Naive thymus-derived CD4-positive, alpha-beta T cell (primary cell): ENCODE measurements at regions of chr6 and their contacts with region 1.

Region 1: DNA sequence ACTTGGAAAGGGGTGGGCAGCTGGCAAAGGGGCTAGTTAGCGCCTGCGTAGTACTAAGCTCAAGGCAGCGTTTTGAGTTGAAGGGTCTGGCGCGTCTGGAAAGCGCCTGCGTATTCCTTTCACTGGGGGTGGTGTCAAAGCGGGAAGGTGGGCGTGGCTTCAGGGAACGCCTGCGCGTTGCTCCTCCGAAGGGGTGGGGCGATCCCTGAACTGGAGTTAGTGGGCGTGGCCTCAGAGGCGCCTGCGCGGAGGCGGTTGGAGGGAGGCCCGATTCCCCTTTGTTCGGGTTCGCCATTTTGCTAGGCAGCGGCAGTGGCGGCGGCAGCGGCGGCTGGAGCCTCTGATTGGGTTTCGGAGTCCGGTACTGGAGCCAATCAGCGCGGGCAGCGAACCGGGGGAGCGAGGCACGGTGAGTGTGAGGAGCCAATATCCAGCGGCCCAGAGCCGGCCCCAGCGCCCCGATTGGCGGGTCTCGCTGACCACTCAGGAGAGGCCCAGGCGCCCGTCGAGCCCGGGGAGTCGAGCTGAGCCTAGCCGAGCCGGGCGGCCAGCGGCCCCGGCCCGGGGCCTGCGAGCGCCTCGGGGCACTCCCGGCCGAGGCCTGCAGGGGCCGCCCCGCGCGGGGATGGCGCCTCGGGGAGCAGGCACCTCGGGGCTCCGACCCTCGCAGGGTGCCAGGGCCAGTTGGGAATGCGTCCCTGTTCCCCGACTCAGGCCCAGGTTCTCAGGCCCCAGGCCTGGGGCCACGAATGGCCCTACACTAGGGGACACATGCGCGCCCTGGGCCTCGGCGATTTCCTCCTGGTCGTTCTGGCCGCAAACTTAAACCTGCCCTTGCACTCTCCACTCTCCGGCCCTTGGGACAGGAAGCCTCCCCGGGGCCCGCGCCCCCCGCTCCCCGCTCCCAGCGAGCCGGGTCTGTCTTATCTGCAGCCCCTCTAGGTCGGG is at the start of gene NFYA:
- DNase-seq: peak; percentile 99 to 100 (median 100)
- ATAC-seq: peak; percentile 80
- H3K4me3 ChIP-seq: peak within 1 kb of the TSS; percentile 78
- H3K4me3 Mint-ChIP-seq: peak within 1 kb of the TSS; percentile 90 to 98 (median 96)
- H3K27ac ChIP-seq: peak within 1 kb of the TSS; percentile 95
- H3K27ac Mint-ChIP-seq: peak within 1 kb of the TSS; percentile 95 to 99 (median 97)
- H3K4me1 ChIP-seq: peaks cover 30% of the 10 kb centered on the region in 2 donors
- H3K4me1 Mint-ChIP-seq: peaks cover 39 to 66% (median 59%) of the 10 kb centered on the region in 7 donors
- H3K27me3 ChIP-seq: no peaks in the 10 kb centered on the region
- H3K27me3 Mint-ChIP-seq: peaks cover 0 to 5% (median 0%) of the 10 kb centered on the region in 5 donors
- total RNA-seq, gene NFYA: 31.6 to 63.3 (median 35.9) TPM

Region 2: GRCh38 chr6:39724787-39725631 is 1347.9 kb before region 1 on chr6 and contains the start of gene KIF6:
- CTCF ChIA-PET with region 1: no interaction called
- POLR2A ChIA-PET with region 1: no interaction called
- intact Hi-C with region 1: loop called in 1 of 2 experiments (anchors 2 kb)
- DNase-seq: peak; percentile 50 to 85 (median 77)
- ATAC-seq: peak; percentile 99
- H3K4me3 ChIP-seq: peak within 1 kb of the TSS; percentile 68
- H3K4me3 Mint-ChIP-seq: peak within 1 kb of the TSS; percentile 92 to 98 (median 97)
- H3K27ac ChIP-seq: no peak within 1 kb of the TSS
- H3K27ac Mint-ChIP-seq: peak within 1 kb of the TSS; percentile 10 to 91 (median 72)
- H3K4me1 ChIP-seq: peaks cover 0 to 3% of the 10 kb centered on the region in 2 donors
- H3K4me1 Mint-ChIP-seq: peaks cover 0 to 9% (median 7%) of the 10 kb centered on the region in 7 donors
- H3K27me3 ChIP-seq: no peaks in the 10 kb centered on the region
- H3K27me3 Mint-ChIP-seq: peaks cover 0 to 6% (median 4%) of the 10 kb centered on the region in 5 donors
- total RNA-seq, gene KIF6: not detected

Region 3: GRCh38 chr6:40922281-40922680 is 150.7 kb before region 1 on chr6:
- CTCF ChIA-PET with region 1: no interaction called
- POLR2A ChIA-PET with region 1: no interaction called
- intact Hi-C with region 1: no loop called
- DNase-seq: no peak
- ATAC-seq: no peak
- H3K4me3 ChIP-seq: no peak overlapping the region
- H3K4me3 Mint-ChIP-seq: no peak overlapping the region
- H3K27ac ChIP-seq: no peak overlapping the region
- H3K27ac Mint-ChIP-seq: no peak overlapping the region
- H3K4me1 ChIP-seq: no peaks in the 10 kb centered on the region
- H3K4me1 Mint-ChIP-seq: peaks cover 0 to 2% (median 0%) of the 10 kb centered on the region in 7 donors
- H3K27me3 ChIP-seq: no peaks in the 10 kb centered on the region
- H3K27me3 Mint-ChIP-seq: peaks cover 15 to 31% (median 21%) of the 10 kb centered on the region in 5 donors

Region 4: DNA sequence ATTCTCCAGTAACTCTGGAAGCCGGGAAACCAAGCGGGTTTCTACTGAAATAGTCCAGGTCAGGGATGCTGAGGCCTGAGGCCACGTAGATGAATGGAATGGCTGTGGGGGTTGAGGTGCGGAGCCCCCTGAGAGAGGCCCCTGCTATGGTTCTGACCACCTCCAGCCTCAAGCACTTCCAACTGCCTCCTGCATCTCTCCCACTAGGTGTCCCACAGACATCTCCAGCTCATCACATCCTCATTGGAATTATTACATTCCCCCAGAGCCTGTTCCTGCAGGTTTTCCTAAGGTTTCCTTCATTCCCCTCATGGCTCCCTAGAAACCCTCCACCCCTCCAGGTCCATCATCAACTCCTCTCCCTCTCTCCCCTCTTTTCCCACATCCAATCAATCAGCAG is 82.6 kb before region 1 on chr6:
- CTCF ChIA-PET with region 1: no interaction called
- POLR2A ChIA-PET with region 1: no interaction called
- intact Hi-C with region 1: no loop called
- DNase-seq: no peak
- ATAC-seq: no peak
- H3K4me3 ChIP-seq: no peak overlapping the region
- H3K4me3 Mint-ChIP-seq: no peak overlapping the region
- H3K27ac ChIP-seq: no peak overlapping the region
- H3K27ac Mint-ChIP-seq: no peak overlapping the region
- H3K4me1 ChIP-seq: no peaks in the 10 kb centered on the region
- H3K4me1 Mint-ChIP-seq: peaks cover 0 to 2% (median 0%) of the 10 kb centered on the region in 7 donors
- H3K27me3 ChIP-seq: no peaks in the 10 kb centered on the region
- H3K27me3 Mint-ChIP-seq: peaks cover 5 to 38% (median 34%) of the 10 kb centered on the region in 5 donors

Region 5: DNA sequence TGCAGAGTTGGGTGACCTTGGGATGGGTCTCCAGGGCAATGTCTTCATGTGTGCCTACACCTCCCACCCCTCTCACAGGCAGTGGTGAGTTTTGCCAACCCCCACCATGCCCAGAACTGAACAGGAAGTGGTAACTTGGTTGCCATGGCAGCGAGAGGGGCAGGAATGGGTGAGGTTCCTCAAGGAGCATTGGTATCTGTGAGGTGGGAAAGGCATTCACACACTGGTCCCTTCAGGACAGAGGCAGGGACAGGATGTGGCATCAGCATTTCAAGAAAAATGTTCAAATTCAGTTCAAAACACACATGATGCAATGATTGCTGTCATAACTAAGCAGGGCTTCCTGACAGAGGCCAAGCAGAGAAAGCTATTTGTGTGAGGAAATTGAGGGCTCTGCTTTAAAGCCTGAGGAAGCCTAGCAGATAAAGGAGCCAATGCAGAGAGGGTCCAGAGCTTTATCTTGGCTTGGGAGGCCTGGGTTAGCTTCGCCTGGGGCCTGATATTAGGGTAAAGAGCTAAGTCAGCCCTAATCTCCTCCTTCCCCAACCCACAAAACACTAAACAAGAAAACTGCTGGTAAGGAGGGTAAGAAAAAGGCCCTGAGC is 127.4 kb after region 1 on chr6:
- CTCF ChIA-PET with region 1: no interaction called
- POLR2A ChIA-PET with region 1: interaction called, 8 read pairs
- intact Hi-C with region 1: loop called (anchors 1 kb)
- DNase-seq: peak; percentile 34 to 87 (median 78)
- ATAC-seq: peak; percentile 79
- H3K4me3 ChIP-seq: peak overlapping the region; percentile 26
- H3K4me3 Mint-ChIP-seq: peak overlapping the region; percentile 76 to 84 (median 82)
- H3K27ac ChIP-seq: peak overlapping the region; percentile 88
- H3K27ac Mint-ChIP-seq: peak overlapping the region; percentile 95 to 100 (median 98)
- H3K4me1 ChIP-seq: peaks cover 47 to 55% of the 10 kb centered on the region in 2 donors
- H3K4me1 Mint-ChIP-seq: peaks cover 52 to 93% (median 83%) of the 10 kb centered on the region in 7 donors
- H3K27me3 ChIP-seq: no peaks in the 10 kb centered on the region
- H3K27me3 Mint-ChIP-seq: no peaks in the 10 kb centered on the region

Region 6: GRCh38 chr6:41545703-41546474 is 472.9 kb after region 1 on chr6 and contains the start of gene FOXP4:
- CTCF ChIA-PET with region 1: no interaction called
- POLR2A ChIA-PET with region 1: no interaction called
- intact Hi-C with region 1: loop called (anchors 1 to 5 kb)
- DNase-seq: peak; percentile 45 to 83 (median 76)
- ATAC-seq: peak; percentile 95
- H3K4me3 ChIP-seq: peak within 1 kb of the TSS; percentile 64
- H3K4me3 Mint-ChIP-seq: peak within 1 kb of the TSS; percentile 91 to 96 (median 94)
- H3K27ac ChIP-seq: peak within 1 kb of the TSS; percentile 19
- H3K27ac Mint-ChIP-seq: peak within 1 kb of the TSS in 8 of 9 donors; percentile 7 to 86 (median 66)
- H3K4me1 ChIP-seq: peaks cover 20 to 27% of the 10 kb centered on the region in 2 donors
- H3K4me1 Mint-ChIP-seq: peaks cover 6 to 42% (median 25%) of the 10 kb centered on the region in 7 donors
- H3K27me3 ChIP-seq: peaks cover 2 to 9% of the 10 kb centered on the region in 2 donors
- H3K27me3 Mint-ChIP-seq: peaks cover 10 to 73% (median 16%) of the 10 kb centered on the region in 5 donors
- total RNA-seq, gene FOXP4: 3.1 to 7.6 (median 4.9) TPM

Region 7: DNA sequence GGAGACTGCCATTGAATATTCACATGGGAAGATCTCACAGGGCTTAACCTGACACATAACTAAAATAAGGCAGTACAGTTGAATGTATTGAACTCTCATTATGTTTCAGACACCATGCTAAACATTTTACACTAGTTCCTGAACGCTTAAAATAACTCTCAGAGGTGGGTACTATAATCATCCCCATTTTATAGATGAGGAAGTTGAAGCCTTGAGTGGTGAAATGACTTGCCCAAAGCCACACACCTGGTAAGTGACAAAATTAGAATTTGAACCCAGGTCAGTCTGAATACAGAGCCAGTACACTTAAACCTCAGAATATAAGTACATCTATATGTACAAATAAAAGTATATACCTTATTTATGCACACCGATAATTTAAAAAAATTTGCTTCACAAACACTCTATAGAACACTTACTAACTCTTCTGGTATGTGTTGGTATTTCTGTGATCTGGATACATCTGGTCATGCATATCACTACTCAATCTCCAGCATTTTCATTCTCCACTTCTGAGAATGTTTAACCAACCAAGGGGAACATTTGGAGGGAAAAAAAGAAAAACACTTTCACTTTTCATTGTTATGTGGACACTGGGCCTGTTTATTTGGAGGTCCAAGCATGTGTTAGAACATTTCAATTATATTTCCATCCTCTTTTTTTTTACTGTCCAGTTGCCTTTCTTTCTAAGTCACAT is 1704.3 kb after region 1 on chr6:
- CTCF ChIA-PET with region 1: no interaction called
- POLR2A ChIA-PET with region 1: no interaction called
- intact Hi-C with region 1: loop called in 1 of 2 experiments (anchors 10 kb)
- DNase-seq: no peak
- ATAC-seq: no peak
- H3K4me3 ChIP-seq: no peak overlapping the region
- H3K4me3 Mint-ChIP-seq: peak overlapping the region in 7 of 10 donors; percentile 6 to 61 (median 39)
- H3K27ac ChIP-seq: peak overlapping the region; percentile 37
- H3K27ac Mint-ChIP-seq: peak overlapping the region in 8 of 9 donors; percentile 60 to 100 (median 82)
- H3K4me1 ChIP-seq: peaks cover 66 to 68% of the 10 kb centered on the region in 2 donors
- H3K4me1 Mint-ChIP-seq: peaks cover 38 to 80% (median 70%) of the 10 kb centered on the region in 7 donors
- H3K27me3 ChIP-seq: no peaks in the 10 kb centered on the region
- H3K27me3 Mint-ChIP-seq: no peaks in the 10 kb centered on the region